AG04449 (cell line): ENCODE measurements at regions of chr10 and their contacts with region 1.

Region 1: DNA sequence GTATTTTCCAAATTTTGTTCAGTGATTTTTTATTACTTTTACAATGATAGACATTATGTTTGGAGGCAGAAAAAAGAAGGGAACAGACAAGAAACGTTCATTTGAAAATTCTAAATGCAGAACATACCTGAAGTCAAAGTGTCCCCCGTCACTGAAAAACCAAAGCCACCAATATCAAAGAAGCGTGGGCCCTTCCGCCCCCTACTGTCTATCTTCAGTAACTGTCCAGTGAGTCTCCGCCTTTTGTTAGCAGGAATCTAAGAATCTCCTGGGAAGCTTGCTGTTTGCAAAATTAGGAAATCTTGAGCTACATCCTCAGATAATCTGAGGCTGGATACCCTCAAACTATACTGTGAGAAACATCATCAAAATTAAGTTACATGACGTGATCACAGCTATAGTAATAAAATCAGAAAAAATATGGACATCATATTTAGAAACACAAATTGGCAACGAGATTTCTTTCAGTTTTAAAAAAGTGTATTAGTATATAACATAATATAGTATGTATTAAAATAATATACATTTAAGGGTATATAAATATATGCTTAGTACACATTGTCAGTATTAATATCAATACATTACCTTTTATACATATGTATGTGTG is 169.3 kb upstream of the AKR1E2 start:
- DNase-seq: no peak
- H3K4me3 ChIP-seq: no peak overlapping the region
- CTCF ChIP-seq: peak; percentile 80

Region 2: GRCh38 chr10:4246881-4247358 is 409.8 kb before region 1 on chr10:
- CTCF ChIA-PET with region 1: interaction called, 11 read pairs
- POLR2A ChIA-PET with region 1: interaction called, 4 read pairs
- DNase-seq: peak; percentile 94
- H3K4me3 ChIP-seq: no peak overlapping the region
- CTCF ChIP-seq: no peak

Region 3: DNA sequence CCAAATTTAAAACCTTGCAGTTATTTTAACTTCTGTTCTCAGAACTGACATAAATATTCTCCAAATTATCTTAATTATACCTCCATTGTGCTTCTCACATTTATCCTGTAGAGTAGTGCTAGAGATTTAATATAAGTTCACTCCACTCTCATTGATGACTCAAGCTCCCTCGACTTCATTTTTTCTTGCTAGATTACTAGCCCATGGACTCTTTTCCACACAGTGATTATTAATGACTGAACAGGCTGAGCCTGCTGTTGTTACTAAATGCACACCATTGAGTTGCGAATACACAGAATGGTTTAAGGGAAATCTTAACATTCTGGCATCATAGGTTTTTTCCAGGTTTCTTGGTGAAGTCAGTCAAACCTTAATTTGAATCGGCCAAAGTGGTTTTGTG is 10.1 kb before region 1 on chr10:
- CTCF ChIA-PET with region 1: interaction called, 11 read pairs
- POLR2A ChIA-PET with region 1: no interaction called
- DNase-seq: no peak
- H3K4me3 ChIP-seq: no peak overlapping the region
- CTCF ChIP-seq: no peak